ENCODE measurements at regions of chr17 and their contacts with region 1.

Region 1: DNA sequence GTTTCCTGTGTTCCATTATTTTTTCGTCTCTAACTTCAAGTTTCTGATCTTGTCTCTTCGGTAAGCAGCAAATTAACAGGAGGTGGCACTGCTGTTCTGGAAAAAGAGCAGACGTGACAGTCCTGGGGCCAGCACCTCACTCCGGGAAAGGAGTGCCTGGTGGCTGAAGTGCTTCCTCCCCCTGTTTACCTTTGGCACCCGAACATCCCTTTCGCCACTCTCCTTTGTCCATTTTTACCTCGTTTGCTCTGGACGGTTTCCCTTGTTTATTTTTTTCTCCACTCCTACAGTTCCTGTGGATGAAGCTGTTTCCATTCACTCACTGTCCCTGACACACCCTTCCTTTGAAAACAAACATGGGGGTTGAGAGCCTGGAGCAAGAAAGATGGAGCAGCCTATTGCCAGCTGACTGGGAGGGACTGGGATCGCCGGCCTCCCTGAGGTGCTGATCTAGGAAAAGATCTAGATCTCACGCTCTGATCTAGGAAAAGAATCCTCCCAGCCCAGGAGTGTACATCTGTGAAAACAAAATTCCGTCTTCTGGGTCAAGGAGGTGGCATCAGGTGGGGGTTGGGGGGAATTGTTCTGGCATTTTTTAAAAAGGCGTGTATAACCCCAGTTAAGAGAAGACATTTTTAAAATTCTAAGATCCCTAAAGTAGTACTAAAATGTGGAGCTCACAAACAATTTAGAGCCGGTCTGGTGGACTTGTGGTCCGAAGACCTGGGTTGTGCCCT is 12.7 kb downstream of the SAP30BP start:
- DNase-seq: no peak
- H3K4me3 ChIP-seq: no peak overlapping the region
- H3K27ac ChIP-seq: peak overlapping the region in 1 of 2 experiments; percentile 64; a peak in 2 of 4 replicates
- H3K4me1 ChIP-seq: peaks cover 5 to 34% of the 10 kb centered on the region in 2 experiments; a peak in 3 of 4 replicates
- H3K27me3 ChIP-seq: no peaks in the 10 kb centered on the region
- CTCF ChIP-seq: peak; percentile 36
- EP300 ChIP-seq: no peak
- RAD21 ChIP-seq: peak; percentile 28; the same call in 1 of the 2 replicates

Region 2: GRCh38 chr17:75619506-75620431 is 60.1 kb before region 1 on chr17:
- CTCF ChIA-PET with region 1: interaction called, 11 read pairs
- POLR2A ChIA-PET with region 1: no interaction called
- DNase-seq: peak; percentile 89
- H3K4me3 ChIP-seq: no peak overlapping the region; a peak in 1 of 4 replicates
- H3K27ac ChIP-seq: no peak overlapping the region
- H3K4me1 ChIP-seq: peaks cover 0 to 24% of the 10 kb centered on the region in 2 experiments; a peak in 1 of 4 replicates
- H3K27me3 ChIP-seq: no peaks in the 10 kb centered on the region
- CTCF ChIP-seq: peak; percentile 73
- EP300 ChIP-seq: no peak
- RAD21 ChIP-seq: peak; percentile 41

Region 3: GRCh38 chr17:75693500-75694481 is 13.9 kb after region 1 on chr17:
- CTCF ChIA-PET with region 1: interaction called, 69 read pairs
- POLR2A ChIA-PET with region 1: interaction called, 5 read pairs
- DNase-seq: peak; percentile 85
- H3K4me3 ChIP-seq: peak overlapping the region in 1 of 2 experiments; percentile 16; a peak in 2 of 4 replicates
- H3K27ac ChIP-seq: peak overlapping the region; percentile 91 to 99
- H3K4me1 ChIP-seq: peaks cover 45 to 62% of the 10 kb centered on the region in 2 experiments; a peak in 3 of 4 replicates
- H3K27me3 ChIP-seq: no peaks in the 10 kb centered on the region
- CTCF ChIP-seq: peak; percentile 53
- EP300 ChIP-seq: peak; percentile 48 to 87; a peak in 2 of 4 replicates
- RAD21 ChIP-seq: peak; percentile 52

Measured in SK-N-SH (cell line).